HEK293T (cell line): ENCODE measurements at regions of chrX and their contacts with region 1.

Region 1: DNA sequence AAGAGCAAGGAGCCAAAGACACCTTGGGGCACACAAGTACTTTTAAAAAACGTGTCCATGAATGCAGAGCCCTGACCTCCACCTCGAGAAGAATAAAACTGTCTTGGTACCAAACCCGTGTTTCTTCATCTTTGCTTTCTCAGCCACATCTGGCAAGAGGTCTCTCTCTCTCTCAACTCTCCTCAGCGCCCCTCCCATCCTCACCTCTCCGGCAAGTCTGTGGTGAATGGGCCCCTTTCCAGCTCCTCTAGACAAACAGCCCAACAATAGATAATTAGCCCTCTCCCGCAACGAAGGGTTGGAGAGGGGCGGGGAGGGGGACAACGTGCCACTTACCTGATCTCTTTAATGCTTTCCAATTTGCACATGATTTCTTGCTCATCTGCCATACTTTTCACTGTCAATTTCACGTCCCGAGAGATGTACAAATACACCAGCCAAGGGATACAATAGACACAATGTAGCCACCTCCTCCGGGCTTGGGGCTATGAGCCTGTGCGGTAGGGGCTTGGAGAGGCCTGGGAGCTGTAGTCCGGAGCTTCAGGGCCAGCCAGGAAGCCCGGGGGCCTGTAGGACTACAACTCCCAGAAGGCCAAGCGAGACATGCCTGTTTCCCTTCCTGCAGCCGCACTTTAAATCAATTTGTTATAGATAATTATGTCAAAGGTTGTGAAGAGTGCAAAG is at the start of gene ZC4H2:
- DNase-seq: peak; percentile 81

Region 2: DNA sequence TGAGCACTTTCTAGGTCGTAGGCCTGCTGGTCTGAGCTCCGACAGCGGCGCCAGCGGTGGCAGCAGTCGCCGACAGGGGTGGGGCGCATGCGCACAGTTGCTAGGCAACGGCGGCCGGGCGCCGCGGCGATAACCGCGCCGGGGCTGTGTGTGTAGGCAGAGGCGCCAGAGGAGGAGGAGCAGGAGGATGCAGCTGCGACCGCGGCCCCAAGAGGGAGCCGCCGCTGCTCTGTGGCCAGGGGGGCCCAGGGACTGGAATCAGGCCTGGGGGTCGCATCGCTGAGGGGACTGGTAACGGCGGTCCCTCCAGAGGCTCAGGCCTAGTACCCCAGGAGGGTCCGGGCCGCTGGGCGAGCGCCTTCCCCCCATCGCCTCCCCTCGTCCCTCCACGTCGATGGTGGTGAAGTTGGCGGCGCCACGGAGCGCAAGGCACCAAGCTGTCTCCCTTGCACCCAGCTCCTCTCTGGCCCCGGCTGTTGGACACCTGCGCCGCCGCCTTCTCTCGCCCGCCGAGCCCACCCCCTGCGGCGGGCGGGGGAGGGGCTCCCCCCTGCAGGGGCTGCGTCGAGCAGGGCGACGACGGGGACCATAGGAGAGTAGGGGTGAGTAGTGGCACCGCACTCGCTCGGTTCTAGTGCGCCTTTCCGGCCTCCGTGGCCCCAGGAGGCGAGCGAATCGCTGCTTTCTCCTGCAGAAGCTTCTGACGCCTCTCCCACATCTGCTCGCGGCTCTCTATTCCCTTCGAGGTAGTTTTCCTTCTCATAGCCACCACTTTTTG is 58.7 kb after region 1 on chrX:
- CTCF ChIA-PET with region 1: no interaction called
- POLR2A ChIA-PET with region 1: interaction called, 16 read pairs
- DNase-seq: peak; percentile 85